PC-9 (cell line): ENCODE measurements at regions of chr3 and their contacts with region 1.

Region 1: DNA sequence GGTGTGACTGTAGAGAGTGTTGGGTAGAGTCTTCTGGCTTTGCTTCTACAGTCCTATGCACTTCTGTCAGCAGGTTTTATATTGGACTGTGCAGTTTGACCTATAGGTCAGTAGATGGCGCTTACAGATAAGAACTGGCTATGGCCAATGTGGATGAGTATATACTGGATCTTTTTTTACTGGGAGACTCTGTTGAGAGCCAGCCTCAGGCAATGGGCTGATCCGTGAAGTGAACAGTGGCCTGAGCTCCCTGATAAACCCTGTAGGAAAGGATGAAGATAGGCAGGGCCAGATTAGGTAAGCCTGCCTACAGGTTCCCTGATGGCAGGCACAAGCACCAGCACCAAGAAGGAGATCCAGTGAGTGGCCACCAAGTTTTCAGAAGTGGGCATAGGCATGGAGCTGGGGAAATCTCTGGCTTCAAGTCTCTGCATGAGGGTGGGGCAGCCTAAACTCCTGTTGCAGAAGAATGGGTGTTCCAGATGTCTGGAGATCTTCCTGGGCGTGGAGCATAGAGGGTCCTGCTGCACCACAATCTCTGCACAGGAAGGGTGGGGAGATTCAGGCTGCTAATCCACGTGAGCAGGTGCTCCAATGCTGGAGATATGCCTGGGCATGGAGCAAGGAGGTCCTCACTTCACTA is 326.0 kb upstream of the SGO1 start:
- DNase-seq: peak in 1 of 2 experiments; percentile 43
- H3K4me3 ChIP-seq: no peak overlapping the region
- H3K27ac ChIP-seq: no peak overlapping the region
- H3K4me1 ChIP-seq: no peaks in the 10 kb centered on the region
- H3K27me3 ChIP-seq: no peaks in the 10 kb centered on the region
- CTCF ChIP-seq: peak; percentile 74

Region 2: DNA sequence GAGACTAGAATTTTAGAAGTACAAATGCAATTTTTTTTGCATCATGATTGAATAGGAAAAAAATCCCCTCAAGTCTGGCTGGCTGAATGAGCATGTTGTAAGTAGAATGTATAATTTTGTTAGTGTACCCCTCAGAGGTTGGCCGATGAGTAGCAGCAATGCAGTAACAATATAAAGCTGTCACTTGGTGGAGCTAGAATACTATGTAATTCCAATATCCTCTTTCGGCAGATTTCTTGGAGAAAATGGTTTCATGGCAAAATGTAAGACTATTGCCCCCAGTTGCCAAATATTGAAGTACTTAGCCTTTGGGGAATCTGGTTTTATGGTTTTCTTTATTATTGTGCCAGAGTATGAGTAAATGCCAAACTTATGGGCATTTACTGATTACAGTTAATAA is 286.2 kb before region 1 on chr3:
- CTCF ChIA-PET with region 1: no interaction called
- POLR2A ChIA-PET with region 1: no interaction called
- intact Hi-C with region 1: loop called (anchors 1 kb)
- DNase-seq: peak; percentile 3 to 49
- H3K4me3 ChIP-seq: no peak overlapping the region
- H3K27ac ChIP-seq: no peak overlapping the region
- H3K4me1 ChIP-seq: no peaks in the 10 kb centered on the region
- H3K27me3 ChIP-seq: no peaks in the 10 kb centered on the region
- CTCF ChIP-seq: peak; percentile 62

Region 3: GRCh38 chr3:20340324-20340928 is 171.6 kb before region 1 on chr3:
- CTCF ChIA-PET with region 1: no interaction called
- POLR2A ChIA-PET with region 1: no interaction called
- intact Hi-C with region 1: loop called (anchors 5 kb)
- DNase-seq: peak; percentile 50 to 58
- H3K4me3 ChIP-seq: no peak overlapping the region
- H3K27ac ChIP-seq: no peak overlapping the region
- H3K4me1 ChIP-seq: no peaks in the 10 kb centered on the region
- H3K27me3 ChIP-seq: no peaks in the 10 kb centered on the region
- CTCF ChIP-seq: peak; percentile 89

Region 4: GRCh38 chr3:20458994-20459716 is 52.8 kb before region 1 on chr3:
- CTCF ChIA-PET with region 1: no interaction called
- POLR2A ChIA-PET with region 1: no interaction called
- intact Hi-C with region 1: no loop called
- DNase-seq: no peak
- H3K4me3 ChIP-seq: no peak overlapping the region
- H3K27ac ChIP-seq: no peak overlapping the region
- H3K4me1 ChIP-seq: no peaks in the 10 kb centered on the region
- H3K27me3 ChIP-seq: no peaks in the 10 kb centered on the region
- CTCF ChIP-seq: no peak

Region 5: GRCh38 chr3:20637729-20638128 is 125.7 kb after region 1 on chr3:
- CTCF ChIA-PET with region 1: no interaction called
- POLR2A ChIA-PET with region 1: no interaction called
- intact Hi-C with region 1: no loop called
- DNase-seq: no peak
- H3K4me3 ChIP-seq: no peak overlapping the region
- H3K27ac ChIP-seq: no peak overlapping the region
- H3K4me1 ChIP-seq: no peaks in the 10 kb centered on the region
- H3K27me3 ChIP-seq: no peaks in the 10 kb centered on the region
- CTCF ChIP-seq: no peak

Region 6: GRCh38 chr3:21216598-21216997 is 704.6 kb after region 1 on chr3:
- CTCF ChIA-PET with region 1: no interaction called
- POLR2A ChIA-PET with region 1: no interaction called
- intact Hi-C with region 1: loop called (anchors 5 kb)
- DNase-seq: no peak
- H3K4me3 ChIP-seq: no peak overlapping the region
- H3K27ac ChIP-seq: no peak overlapping the region
- H3K4me1 ChIP-seq: no peaks in the 10 kb centered on the region
- H3K27me3 ChIP-seq: no peaks in the 10 kb centered on the region
- CTCF ChIP-seq: peak; percentile 57

Region 7: DNA sequence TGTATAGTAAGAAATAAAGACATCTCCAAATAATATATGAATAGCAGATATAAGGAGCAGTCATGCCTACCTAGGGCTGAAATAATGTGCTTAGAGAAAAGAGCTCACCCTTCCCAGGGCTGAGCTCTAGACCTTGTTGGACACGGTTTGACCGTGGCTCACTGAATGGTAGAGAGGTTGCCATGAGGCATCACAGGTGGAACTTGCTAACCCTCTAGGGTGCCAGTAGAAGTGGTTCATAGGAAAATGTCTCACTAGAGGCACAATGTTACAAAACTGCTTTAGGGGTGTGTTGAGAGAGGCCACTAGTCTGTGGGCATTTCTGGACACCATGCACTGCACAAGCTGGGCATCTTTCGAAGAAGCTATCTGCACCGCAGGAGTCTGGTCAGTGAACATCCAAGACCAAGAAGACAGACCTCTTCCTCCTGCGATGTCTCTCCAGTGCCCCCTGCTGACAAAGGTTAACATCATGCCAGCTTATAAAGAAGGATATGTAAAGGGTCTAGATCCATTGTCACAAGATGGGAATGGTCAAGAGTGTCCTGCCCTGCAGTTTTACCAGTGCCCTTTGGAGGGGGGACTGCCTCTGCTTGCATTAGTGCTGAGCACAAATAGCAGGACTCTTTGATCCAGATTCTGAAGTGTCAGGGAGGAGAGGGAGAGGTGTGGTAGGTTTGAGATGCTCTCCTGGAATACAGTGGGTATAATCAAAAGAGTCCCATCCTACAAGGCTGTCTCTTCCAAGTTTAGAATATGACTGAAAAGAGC is 972.3 kb after region 1 on chr3:
- CTCF ChIA-PET with region 1: no interaction called
- POLR2A ChIA-PET with region 1: no interaction called
- intact Hi-C with region 1: loop called (anchors 10 kb)
- DNase-seq: peak; percentile 26 to 44
- H3K4me3 ChIP-seq: no peak overlapping the region
- H3K27ac ChIP-seq: no peak overlapping the region
- H3K4me1 ChIP-seq: no peaks in the 10 kb centered on the region
- H3K27me3 ChIP-seq: no peaks in the 10 kb centered on the region
- CTCF ChIP-seq: peak; percentile 58

Region 8: DNA sequence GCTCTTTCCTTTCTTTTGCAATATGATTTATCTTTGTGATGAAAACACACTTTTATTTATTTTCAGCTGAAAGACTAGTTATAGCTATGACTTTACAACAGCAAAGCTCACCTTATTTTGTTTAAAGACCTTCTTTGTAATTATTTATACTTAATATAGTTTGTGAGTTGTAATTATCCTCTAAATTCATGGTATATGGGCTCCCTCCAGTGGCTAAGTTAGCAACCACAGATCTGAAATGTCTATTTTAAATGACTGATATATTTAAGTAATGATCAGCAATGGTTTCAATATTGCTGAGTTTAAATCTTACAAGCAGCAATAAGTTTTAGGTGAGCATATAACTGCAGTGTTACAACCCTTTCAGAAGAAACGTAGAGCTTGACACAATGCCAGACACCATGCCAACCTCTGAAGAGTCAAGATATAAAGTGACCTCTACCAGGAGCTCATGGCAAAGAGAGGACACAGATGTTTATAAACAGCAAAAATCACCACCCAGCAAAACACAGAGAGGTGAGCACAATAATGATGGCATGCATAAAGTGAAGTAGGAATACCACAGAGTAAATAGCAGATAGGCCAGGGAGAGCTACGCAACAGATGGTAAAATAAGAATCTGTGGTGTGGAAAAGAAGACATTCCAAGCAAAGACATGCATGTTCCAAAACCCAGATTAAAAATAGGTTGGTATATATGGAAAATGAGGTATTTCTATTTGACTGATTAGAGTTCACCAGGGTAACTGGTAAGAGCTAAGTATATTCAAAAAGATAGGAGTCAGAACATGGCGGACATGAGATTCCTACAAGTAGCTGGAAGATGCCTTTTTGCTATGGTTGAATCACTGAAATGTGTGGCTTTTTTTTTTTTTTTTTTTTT is 1382.7 kb after region 1 on chr3:
- CTCF ChIA-PET with region 1: no interaction called
- POLR2A ChIA-PET with region 1: no interaction called
- intact Hi-C with region 1: loop called (anchors 5 kb)
- DNase-seq: no peak
- H3K4me3 ChIP-seq: no peak overlapping the region
- H3K27ac ChIP-seq: no peak overlapping the region
- H3K4me1 ChIP-seq: no peaks in the 10 kb centered on the region
- H3K27me3 ChIP-seq: no peaks in the 10 kb centered on the region
- CTCF ChIP-seq: peak; percentile 80